Activated CD4-positive, alpha-beta T cell treated with anti-CD3 and anti-CD28 coated beads, Interleukin-2, amount 10 ng/mL, durations not matched to agents 24 days and 14 days (primary cell): ENCODE measurements at regions of chr13 and their contacts with region 1.

Region 1: DNA sequence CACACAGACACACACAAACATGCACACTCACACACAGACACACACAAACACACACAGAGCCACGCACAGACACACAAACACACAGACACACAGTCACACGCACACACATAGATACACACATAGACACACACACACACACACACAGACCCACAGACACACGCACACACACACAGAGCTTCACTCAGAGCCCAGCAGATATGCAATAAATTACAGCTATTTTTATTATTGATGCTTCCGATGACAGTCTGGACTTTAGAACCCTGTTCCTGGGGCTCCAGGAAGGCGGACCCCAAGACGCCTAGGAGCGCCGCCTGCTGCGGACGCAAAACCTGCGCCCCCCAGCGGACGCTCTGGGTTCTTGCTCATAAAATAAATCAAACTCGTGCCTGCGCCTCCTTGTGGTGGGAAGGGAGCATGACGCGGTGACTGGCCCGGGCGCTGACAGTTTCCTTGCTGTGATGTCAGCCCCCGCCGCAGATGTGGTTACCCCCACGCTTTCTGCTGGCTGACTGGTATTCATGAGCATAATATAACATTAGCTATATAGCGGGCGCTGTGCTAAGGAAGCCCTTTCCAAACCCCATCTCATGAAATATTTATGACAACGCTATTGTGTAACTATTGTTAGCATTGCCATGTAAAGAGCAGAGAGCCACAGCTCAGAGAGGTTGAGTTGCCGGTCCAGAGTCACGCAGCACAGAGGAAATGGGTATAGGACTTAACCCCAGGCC is 64.4 kb upstream of the TM9SF2 start:
- DNase-seq: peak; percentile 98
- H3K4me3 Mint-ChIP-seq: peak overlapping the region; percentile 5
- H3K27ac Mint-ChIP-seq: peak overlapping the region; percentile 17
- H3K4me1 Mint-ChIP-seq: peaks cover 58% of the 10 kb centered on the region
- H3K27me3 Mint-ChIP-seq: peaks cover 31% of the 10 kb centered on the region

Region 2: DNA sequence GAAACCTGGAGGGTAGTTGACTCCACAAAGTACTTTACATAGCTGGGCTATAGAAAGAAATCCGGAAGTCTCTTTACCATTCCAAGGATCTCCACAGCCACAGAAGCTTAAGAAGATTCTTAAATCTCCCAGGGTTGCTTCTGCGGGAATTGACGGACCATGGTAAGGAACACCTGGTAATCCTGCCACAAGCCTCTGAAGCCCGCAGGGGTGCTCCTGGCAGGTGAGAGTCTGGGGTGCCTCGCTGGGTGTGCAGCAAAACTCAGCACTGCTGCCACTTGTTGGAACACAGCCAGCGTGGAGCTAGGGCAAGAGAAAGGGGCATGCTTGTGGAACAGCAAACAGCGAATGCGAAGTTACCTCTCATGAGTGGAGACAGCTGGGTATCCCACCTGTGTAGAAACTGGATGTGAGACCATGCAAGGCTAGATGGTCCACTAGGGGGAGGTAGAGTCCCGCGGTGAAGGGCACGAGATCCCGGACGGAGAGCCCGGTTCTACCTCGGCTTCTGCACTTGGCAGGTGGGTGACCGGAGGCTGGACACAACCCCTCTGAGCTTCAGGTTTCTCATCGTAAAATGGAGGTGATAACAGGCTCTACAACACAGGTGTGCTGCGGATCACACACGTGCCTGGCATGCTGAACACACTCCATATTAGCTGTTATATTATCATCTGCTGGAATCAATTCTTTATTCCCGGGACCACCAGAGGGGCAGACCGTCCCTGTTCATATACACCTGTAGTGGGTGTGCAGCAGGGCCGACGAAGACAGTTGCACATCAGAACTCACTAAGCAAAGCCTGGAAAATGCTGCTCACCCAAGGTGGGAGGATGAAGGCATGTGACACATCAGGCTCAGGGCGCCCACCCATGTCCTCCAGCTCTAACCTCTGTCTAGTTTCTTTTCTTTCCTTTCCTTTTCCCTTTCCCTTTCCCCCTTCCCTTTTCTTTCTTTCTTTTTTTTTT is 260.3 kb before region 1 on chr13:
- intact Hi-C with region 1: loop called (anchors 2 kb)
- DNase-seq: peak; percentile 93
- H3K4me3 Mint-ChIP-seq: peak overlapping the region; percentile 57
- H3K27ac Mint-ChIP-seq: no peak overlapping the region
- H3K4me1 Mint-ChIP-seq: peaks cover 31% of the 10 kb centered on the region
- H3K27me3 Mint-ChIP-seq: peaks cover 9% of the 10 kb centered on the region

Region 3: DNA sequence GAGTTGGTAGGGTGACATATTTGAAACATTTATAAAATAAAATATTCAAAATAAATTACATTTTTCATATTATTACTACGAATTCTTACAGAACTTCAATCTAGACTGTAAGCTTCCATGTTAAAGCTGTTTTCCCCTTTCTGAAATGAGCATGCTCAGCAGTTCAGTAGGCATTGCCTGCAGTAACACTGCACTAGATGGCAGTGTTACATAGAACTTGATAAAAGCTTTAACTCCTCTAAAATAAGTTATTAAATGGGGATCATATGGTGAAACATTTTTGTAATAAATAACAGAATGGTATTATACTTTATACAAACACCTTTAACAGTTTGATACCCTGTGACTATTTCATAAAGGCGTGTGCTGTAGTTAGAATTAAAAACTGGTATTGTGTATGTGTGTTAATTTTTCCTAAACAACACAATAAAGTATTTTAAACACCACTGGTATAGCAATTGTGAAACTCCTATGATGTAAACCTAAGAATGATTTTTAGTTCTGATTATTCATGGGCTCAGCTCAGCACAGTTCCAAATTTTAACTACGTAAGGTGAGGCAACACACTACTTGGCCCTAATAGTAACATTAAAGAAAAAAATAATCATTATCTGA is 167.1 kb before region 1 on chr13:
- intact Hi-C with region 1: loop called (anchors 1 kb)
- DNase-seq: peak; percentile 77
- H3K4me3 Mint-ChIP-seq: no peak overlapping the region
- H3K27ac Mint-ChIP-seq: no peak overlapping the region
- H3K4me1 Mint-ChIP-seq: peaks cover 44% of the 10 kb centered on the region
- H3K27me3 Mint-ChIP-seq: no peaks in the 10 kb centered on the region

Region 4: GRCh38 chr13:99314640-99315176 is 122.1 kb before region 1 on chr13:
- intact Hi-C with region 1: loop called (anchors 2 kb)
- DNase-seq: peak; percentile 89
- H3K4me3 Mint-ChIP-seq: peak overlapping the region; percentile 76
- H3K27ac Mint-ChIP-seq: peak overlapping the region; percentile 94
- H3K4me1 Mint-ChIP-seq: peaks cover 67% of the 10 kb centered on the region
- H3K27me3 Mint-ChIP-seq: no peaks in the 10 kb centered on the region

Region 5: DNA sequence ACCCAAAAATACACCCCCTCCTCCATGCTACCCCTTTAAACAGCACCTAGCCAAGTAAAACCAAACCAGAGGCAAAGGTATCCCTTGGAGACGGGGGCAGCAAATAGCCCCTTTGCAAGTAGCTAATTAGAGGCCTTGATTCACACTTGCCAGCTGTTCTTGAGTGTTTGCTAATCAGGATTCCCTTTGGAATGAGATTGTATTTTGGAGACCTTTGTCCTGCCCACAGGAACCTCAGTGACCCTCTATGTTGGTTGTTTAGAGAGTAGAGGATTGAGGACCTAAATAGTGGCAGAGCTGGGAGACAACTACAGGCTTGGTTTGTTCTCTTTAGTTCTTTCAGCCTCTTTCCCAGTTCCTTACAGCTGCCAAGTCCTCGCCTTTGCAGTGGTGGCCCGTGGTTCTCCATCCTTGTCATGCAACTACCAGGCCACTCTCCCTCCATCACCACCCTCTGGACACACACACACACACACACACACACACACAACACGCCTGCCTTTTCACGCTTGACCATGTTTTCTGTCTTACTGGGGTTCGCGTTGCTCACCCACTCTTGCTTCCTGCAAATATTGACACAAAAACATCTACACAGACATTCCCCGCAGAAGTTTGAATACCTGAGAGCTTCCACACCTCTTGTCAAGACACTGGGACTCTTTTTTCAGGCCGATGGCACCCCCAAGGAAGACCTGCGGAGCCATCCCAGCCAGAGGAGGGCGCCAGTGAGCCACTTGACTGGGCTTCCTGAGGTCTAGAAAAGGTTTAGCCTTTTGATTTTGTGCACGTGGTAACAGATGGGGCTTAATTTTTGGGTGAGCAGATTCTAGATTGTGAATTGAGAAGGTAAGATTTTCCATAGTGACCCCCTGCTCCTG is 49.7 kb before region 1 on chr13:
- intact Hi-C with region 1: loop called (anchors 1 kb)
- DNase-seq: peak; percentile 94
- H3K4me3 Mint-ChIP-seq: no peak overlapping the region
- H3K27ac Mint-ChIP-seq: peak overlapping the region; percentile 62
- H3K4me1 Mint-ChIP-seq: peaks cover 46% of the 10 kb centered on the region
- H3K27me3 Mint-ChIP-seq: no peaks in the 10 kb centered on the region

Region 6: DNA sequence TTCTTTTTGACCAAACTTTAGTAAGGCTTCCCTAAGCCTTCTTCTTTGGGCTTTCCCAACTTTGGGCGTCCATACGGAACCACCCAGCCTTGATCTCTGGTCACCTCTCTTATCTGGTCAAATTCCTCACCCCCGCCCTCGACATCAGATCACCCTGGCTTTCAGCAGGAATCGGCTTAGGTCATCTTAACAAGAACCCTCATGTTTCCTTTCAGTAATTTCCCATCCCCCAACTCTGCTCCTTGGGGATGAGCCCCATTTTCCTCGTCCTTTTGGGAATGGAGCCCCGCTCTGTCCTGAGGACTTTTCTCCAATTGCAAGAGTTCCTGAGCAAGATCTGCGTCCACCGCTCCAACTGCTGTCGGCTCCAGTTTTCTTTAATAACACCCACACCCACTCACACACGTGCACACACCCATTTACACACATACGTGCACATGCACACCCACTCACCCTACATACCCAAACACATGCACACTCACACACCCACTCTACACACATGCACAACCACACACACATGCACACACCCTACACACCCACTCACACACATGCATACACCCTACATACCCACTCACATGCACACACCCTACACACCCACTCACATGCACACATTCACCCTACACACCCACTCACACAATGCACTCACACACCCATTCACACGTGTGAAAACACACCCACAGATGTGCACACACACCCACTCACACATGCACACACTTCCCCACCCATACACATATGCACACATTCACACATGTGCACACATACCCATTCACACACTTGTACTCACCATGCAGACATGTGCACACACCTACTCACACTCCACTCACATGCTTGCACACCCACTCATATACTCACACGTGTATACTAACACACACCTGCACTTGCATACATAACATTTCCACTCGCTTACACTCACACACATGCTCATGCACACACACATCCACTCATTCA is 22.5 kb before region 1 on chr13:
- intact Hi-C with region 1: no loop called
- DNase-seq: no peak
- H3K4me3 Mint-ChIP-seq: no peak overlapping the region
- H3K27ac Mint-ChIP-seq: no peak overlapping the region
- H3K4me1 Mint-ChIP-seq: peaks cover 29% of the 10 kb centered on the region
- H3K27me3 Mint-ChIP-seq: no peaks in the 10 kb centered on the region

Region 7: DNA sequence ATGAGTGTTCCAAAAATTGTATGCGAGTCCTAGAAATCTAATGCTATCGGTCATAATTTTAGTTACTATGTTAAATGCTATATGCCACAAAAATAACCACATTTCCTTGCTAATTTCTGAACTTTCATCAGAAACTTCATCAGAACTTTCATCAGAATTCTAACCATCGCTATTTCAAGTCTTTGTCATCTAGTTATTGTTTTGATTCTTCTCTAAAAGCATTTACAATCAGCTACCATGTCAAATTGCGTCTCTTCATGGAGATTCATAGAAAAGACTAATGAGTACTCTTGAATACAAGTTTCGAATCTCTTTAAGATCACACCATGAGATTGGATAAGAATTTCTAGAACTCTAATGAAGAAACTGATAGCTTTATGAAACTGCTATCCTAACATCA is 11.7 kb after region 1 on chr13:
- intact Hi-C with region 1: no loop called
- DNase-seq: no peak
- H3K4me3 Mint-ChIP-seq: no peak overlapping the region
- H3K27ac Mint-ChIP-seq: no peak overlapping the region
- H3K4me1 Mint-ChIP-seq: peaks cover 4% of the 10 kb centered on the region
- H3K27me3 Mint-ChIP-seq: peaks cover 18% of the 10 kb centered on the region

Region 8: GRCh38 chr13:99484473-99484872 is 47.6 kb after region 1 on chr13:
- intact Hi-C with region 1: no loop called
- DNase-seq: peak; percentile 72
- H3K4me3 Mint-ChIP-seq: peak overlapping the region; percentile 27
- H3K27ac Mint-ChIP-seq: no peak overlapping the region
- H3K4me1 Mint-ChIP-seq: peaks cover 20% of the 10 kb centered on the region
- H3K27me3 Mint-ChIP-seq: no peaks in the 10 kb centered on the region

Region 9: GRCh38 chr13:99501184-99501847 is 64.5 kb after region 1 on chr13 and contains the start of gene TM9SF2:
- intact Hi-C with region 1: loop called (anchors 1 kb)
- DNase-seq: peak; percentile 99
- H3K4me3 Mint-ChIP-seq: peak within 1 kb of the TSS; percentile 94
- H3K27ac Mint-ChIP-seq: peak within 1 kb of the TSS; percentile 96
- H3K4me1 Mint-ChIP-seq: peaks cover 60% of the 10 kb centered on the region
- H3K27me3 Mint-ChIP-seq: no peaks in the 10 kb centered on the region
- total RNA-seq, gene TM9SF2: 57.8 and 60.2 TPM in 2 replicates

Region 10: GRCh38 chr13:99565478-99566124 is 128.8 kb after region 1 on chr13:
- intact Hi-C with region 1: no loop called
- DNase-seq: no peak
- H3K4me3 Mint-ChIP-seq: peak overlapping the region; percentile 5
- H3K27ac Mint-ChIP-seq: no peak overlapping the region
- H3K4me1 Mint-ChIP-seq: peaks cover 2% of the 10 kb centered on the region
- H3K27me3 Mint-ChIP-seq: no peaks in the 10 kb centered on the region